ENCODE measurements at regions of chr1 and their contacts with region 1.

Region 1: GRCh38 chr1:198620951-198621824 is 17.7 kb upstream of the PTPRC start:
- DNase-seq: peak; percentile 66
- H3K4me3 Mint-ChIP-seq: peak overlapping the region; percentile 84
- H3K27ac Mint-ChIP-seq: peak overlapping the region; percentile 99
- H3K4me1 Mint-ChIP-seq: peaks cover 82% of the 10 kb centered on the region
- H3K27me3 Mint-ChIP-seq: no peaks in the 10 kb centered on the region

Region 2: DNA sequence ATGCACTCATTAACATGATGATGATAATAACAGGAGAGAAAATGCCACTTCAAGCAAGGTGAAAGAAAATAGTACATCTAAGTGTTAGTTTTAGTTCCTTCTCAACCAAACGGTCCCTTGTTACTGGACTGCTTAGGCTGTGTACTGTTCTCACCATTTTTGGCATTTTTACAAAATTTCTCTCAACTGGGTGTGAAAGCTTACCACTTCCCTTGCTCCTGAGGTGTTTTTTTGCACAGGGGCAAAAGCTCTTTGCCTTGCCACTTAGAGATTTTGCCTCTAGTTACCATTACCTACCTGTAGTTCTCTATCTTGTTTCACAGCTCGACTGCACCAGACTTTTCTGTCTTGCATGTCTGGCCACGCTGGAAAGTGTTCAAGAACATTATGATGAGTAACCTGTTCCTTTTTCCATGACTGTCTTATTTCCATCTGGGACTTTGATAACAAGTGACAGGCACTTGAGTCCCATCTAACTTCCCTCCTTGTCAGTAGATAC is 453.7 kb before region 1 on chr1:
- intact Hi-C with region 1: loop called (anchors 2 kb)
- DNase-seq: peak; percentile 20
- H3K4me3 Mint-ChIP-seq: peak overlapping the region; percentile 56
- H3K27ac Mint-ChIP-seq: peak overlapping the region; percentile 91
- H3K4me1 Mint-ChIP-seq: peaks cover 78% of the 10 kb centered on the region
- H3K27me3 Mint-ChIP-seq: no peaks in the 10 kb centered on the region

Region 3: DNA sequence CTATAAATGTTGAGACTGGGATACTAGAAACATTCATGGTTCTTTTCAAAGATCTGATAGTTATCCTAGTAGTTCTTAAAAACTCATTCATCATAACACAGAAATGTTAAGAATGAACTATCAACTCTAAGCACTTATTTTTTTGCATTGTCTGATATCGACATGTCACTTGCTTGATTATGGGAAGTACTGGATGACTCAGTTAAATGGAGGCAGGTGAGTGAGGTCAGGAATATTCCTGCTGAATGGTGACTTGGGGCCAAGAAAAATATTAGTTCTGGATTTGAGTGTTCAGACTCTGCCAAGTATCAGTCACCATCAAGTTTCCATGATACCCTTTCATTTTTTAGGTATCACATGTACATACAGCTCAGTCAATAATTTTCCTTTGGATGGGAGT is 400.8 kb before region 1 on chr1:
- intact Hi-C with region 1: no loop called
- DNase-seq: no peak
- H3K4me3 Mint-ChIP-seq: no peak overlapping the region
- H3K27ac Mint-ChIP-seq: no peak overlapping the region
- H3K4me1 Mint-ChIP-seq: peaks cover 15% of the 10 kb centered on the region
- H3K27me3 Mint-ChIP-seq: no peaks in the 10 kb centered on the region

Region 4: DNA sequence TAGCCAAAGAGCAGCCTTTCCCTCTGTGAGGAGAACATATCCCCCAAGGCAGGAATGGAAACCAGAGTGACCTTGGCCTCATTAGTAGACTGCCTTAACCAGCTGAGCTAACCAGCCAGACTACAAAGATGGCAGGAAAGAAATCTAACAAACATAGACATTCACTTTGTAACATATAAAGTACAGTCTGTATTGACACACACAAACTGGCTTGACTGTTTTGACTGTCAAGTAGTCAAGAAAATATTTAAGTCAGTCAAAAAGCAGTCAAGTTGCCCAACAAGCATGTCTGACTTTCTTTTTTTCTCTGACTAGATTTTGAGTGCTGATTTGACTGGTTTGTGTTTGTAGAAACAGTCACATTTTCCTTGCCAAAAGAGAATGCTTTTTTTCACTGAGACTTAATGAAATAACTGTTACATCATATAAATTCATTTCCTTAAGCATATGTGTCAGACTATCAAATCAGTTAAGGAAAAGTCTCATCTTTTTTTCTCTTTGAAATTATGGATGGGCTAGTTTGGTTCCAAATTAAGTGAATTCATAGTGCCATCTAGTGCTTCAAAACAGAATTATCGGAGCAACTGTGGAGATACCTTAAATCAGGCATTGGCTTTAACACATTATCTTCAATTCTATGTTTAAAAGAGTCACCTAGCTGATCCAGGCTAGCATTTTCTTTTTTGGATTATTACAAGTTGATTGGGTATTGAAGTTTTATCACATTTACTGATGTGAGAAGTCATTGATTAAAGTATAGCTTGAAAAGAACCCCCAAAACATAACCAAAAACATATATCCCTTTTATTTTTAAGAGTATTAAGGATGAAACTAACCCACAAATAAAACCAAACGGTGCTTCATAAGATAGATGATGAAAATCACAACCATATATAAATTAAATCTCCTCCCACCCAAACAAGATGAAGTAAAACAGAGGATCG is 155.7 kb before region 1 on chr1:
- intact Hi-C with region 1: loop called (anchors 5 kb)
- DNase-seq: no peak
- H3K4me3 Mint-ChIP-seq: no peak overlapping the region
- H3K27ac Mint-ChIP-seq: no peak overlapping the region
- H3K4me1 Mint-ChIP-seq: peaks cover 13% of the 10 kb centered on the region
- H3K27me3 Mint-ChIP-seq: no peaks in the 10 kb centered on the region

Region 5: DNA sequence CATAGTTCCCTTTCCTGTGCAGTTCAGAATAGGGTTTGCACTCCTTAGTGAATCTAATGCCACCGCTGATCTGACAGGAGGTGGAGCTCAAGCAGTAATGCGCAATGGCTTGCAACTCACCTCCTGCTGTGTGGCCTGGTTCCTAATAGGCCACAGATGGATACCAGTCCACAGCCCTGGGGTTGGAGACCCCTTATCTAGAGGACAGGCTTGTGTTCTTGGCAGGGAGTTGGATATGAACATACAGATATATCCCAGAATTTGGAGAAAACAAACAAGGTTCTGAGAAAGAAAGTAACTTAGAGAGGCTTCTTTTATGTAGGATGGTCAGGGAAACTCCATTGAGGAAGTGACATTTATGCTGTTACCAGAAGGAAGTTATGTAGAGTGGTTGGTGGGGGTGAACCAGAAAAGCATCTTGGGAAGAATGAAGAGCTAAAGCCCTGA is 12.5 kb after region 1 on chr1:
- intact Hi-C with region 1: loop called (anchors 1 kb)
- DNase-seq: no peak
- H3K4me3 Mint-ChIP-seq: peak overlapping the region; percentile 38
- H3K27ac Mint-ChIP-seq: peak overlapping the region; percentile 73
- H3K4me1 Mint-ChIP-seq: peaks cover 81% of the 10 kb centered on the region
- H3K27me3 Mint-ChIP-seq: no peaks in the 10 kb centered on the region

Region 6: GRCh38 chr1:198657550-198658064 is 36.4 kb after region 1 on chr1:
- intact Hi-C with region 1: loop called (anchors 1 kb)
- DNase-seq: no peak
- H3K4me3 Mint-ChIP-seq: peak overlapping the region; percentile 63
- H3K27ac Mint-ChIP-seq: peak overlapping the region; percentile 84
- H3K4me1 Mint-ChIP-seq: peaks cover 68% of the 10 kb centered on the region
- H3K27me3 Mint-ChIP-seq: no peaks in the 10 kb centered on the region

Region 7: DNA sequence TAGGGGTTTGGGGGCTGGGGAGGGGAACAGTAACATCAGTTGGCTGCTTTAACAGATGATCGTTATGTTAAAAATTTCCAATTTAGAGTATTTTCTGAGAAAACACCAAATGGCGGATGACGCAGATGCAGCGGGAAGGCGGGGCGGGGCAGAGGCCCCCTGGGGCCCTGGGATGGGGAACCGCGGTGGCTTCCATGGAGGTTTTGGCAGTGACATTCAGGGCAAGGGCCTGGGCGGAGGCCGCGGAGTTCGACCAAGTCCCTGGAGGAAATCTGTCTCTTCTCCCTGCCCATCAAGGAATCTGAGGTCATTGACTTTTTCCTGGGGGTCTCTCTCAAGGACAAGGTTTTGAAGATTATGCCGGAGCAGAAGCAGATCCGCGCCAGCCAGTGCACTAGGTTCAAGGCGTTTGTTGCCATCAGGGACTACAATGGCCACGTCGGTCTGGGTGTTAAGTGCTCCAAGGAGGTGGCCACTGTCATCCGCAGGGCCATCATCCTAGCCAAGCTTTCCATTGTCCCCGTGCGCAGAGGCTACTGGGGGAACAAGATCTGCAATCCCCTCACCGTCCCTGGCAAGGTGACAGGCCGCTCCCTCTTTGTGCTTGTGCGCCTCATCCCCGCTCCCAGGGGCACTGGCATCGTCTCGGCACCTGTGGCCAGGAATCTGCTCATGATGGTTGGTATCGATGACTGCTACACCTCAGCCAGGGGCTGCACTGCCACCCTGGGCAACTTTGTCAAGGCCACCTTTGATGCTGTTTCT is 327.9 kb after region 1 on chr1:
- intact Hi-C with region 1: no loop called
- DNase-seq: no peak
- H3K4me3 Mint-ChIP-seq: no peak overlapping the region
- H3K27ac Mint-ChIP-seq: no peak overlapping the region
- H3K4me1 Mint-ChIP-seq: no peaks in the 10 kb centered on the region
- H3K27me3 Mint-ChIP-seq: no peaks in the 10 kb centered on the region